ENCODE measurements at regions of chr10 and their contacts with region 1.

Region 1: DNA sequence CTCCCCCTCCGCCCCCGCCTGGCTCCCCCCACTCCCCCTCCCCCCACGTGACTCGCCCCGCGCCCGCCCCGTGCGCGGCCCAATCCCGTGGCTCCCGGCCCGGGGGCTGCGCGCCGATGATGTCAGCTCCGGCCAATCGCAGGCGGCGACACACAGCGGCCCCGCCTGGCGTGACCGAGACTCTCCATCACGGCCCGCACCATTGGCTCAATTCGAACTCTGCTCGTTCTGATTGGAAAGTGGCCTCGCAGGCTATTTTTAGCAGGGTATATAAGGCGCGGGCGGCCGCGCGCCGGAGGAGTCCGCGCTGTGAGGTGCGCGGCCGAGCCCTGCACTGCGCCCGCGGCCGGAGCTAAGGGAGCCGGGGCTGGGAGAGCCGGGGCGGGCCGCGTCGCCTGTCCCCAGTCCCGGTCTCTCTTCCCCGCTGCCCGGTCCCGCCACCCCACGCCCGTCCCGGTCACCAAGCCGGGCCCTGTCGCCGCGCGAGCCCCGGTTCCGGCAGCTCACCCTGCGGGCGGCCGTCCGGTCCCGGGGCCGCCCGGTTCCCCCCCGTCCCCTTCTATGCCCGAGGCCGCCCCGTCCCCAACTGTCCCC is 345 bp upstream of the KLF6 start:
- DNase-seq: peak; percentile 100
- ATAC-seq: peak; percentile 78
- H3K4me3 ChIP-seq: peak overlapping the region in 4 of 5 experiments; percentile 90 to 99 (median 98)
- H3K4me3 Mint-ChIP-seq: peak overlapping the region; percentile 96
- H3K27ac ChIP-seq: peak overlapping the region; percentile 99 to 100
- H3K27ac Mint-ChIP-seq: peak overlapping the region; percentile 96
- H3K4me1 ChIP-seq: peaks cover 30 to 33% of the 10 kb centered on the region in 2 donors
- H3K4me1 Mint-ChIP-seq: peaks cover 31% of the 10 kb centered on the region
- H3K27me3 ChIP-seq: no peaks in the 10 kb centered on the region
- H3K27me3 Mint-ChIP-seq: no peaks in the 10 kb centered on the region
- CTCF ChIP-seq: no peak

Region 2: DNA sequence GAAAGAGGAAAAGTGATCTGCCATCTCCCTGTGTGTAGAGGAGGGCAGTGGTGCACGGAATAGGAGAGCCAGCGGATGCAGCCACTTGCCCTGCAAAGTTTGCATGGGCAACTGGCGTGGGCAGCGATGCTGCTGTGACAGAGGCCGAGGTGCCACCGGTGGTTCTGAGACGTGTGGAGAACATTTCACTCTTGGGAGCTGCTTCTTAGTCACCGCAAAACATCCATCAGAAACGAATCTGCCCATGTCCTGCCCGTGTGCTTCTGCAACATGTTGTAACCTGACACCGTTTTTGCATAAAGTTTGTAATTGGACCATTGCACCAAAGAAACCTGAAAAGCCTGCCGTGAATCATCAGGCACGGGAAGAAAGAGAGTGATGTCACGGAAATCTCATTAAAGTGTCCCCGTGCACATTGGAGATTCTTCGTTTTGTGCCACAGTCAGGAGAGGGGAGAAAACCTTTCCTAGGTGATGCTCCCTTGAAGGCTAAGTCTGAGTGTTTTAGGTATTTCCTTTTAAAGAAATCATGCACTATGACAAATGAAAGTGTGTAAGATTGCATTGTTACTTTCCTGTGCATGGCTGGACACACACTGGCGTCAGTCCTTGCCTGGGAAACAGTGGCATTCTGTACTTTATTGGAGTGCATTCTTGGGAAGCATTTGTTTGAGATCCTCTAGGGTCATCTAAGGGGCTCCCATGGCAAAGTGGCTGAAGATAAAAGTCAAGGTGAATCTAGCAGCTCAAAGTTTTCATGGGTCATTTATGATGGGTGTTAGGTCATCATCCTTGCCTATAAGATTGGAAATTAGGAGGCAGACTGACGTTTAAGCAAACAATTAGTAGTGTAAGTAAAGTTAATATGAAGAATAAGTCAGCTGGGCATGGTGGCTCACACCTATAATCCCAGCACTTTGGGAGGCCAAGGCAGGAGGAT is 302.9 kb before region 1 on chr10:
- CTCF ChIA-PET with region 1: no interaction called
- POLR2A ChIA-PET with region 1: interaction called, 13 read pairs
- intact Hi-C with region 1: loop called (anchors 1 kb)
- DNase-seq: peak; percentile 17
- ATAC-seq: no peak
- H3K4me3 ChIP-seq: peak overlapping the region in 1 of 5 experiments; percentile 10
- H3K4me3 Mint-ChIP-seq: peak overlapping the region; percentile 26
- H3K27ac ChIP-seq: no peak overlapping the region
- H3K27ac Mint-ChIP-seq: peak overlapping the region; percentile 39
- H3K4me1 ChIP-seq: peaks cover 60 to 65% of the 10 kb centered on the region in 2 donors
- H3K4me1 Mint-ChIP-seq: peaks cover 62% of the 10 kb centered on the region
- H3K27me3 ChIP-seq: no peaks in the 10 kb centered on the region
- H3K27me3 Mint-ChIP-seq: no peaks in the 10 kb centered on the region
- CTCF ChIP-seq: no peak

Region 3: DNA sequence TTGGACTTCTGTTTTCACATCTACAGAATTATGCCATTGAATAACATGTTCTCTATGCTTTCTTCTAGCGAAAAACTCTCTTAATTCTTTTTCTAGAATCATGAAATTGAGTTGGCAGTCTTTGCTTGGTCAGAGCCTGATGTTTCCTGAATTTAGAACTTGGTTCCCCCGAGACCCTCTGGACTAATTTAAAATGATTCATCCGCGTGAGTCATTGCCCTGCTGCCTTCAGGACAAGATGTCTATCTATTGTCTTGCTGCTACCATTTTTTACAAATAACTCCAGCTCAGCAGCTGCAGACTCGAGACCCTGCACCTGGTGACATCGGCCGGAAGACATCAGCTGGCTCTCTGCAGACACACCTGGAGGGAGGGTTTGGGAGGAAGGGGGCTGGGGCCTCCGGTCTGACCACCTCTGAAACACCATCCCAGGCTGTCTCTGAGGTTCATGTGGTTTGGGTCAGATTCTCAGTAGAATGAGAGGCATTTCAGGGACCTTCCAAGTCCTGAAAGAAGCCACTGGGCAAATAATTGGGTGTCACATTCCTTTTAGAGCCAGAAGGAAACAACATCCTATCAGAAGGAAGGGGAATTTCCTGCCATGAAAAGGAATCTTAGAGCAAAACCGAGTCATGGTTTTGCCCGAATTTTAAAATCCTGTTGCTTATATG is 20.6 kb after region 1 on chr10:
- CTCF ChIA-PET with region 1: interaction called, 9 read pairs
- POLR2A ChIA-PET with region 1: interaction called, 40 read pairs
- intact Hi-C with region 1: loop called (anchors 1 kb)
- DNase-seq: peak; percentile 59
- ATAC-seq: peak; percentile 54
- H3K4me3 ChIP-seq: peak overlapping the region in 1 of 5 experiments; percentile 16
- H3K4me3 Mint-ChIP-seq: peak overlapping the region; percentile 74
- H3K27ac ChIP-seq: peak overlapping the region; percentile 84 to 85
- H3K27ac Mint-ChIP-seq: peak overlapping the region; percentile 97
- H3K4me1 ChIP-seq: peaks cover 49 to 50% of the 10 kb centered on the region in 2 donors
- H3K4me1 Mint-ChIP-seq: peaks cover 58% of the 10 kb centered on the region
- H3K27me3 ChIP-seq: no peaks in the 10 kb centered on the region
- H3K27me3 Mint-ChIP-seq: no peaks in the 10 kb centered on the region
- CTCF ChIP-seq: no peak

Region 4: GRCh38 chr10:3852147-3852904 is 67.0 kb after region 1 on chr10:
- CTCF ChIA-PET with region 1: interaction called, 3 read pairs
- POLR2A ChIA-PET with region 1: interaction called, 34 read pairs
- intact Hi-C with region 1: loop called (anchors 1 kb)
- DNase-seq: peak; percentile 53
- ATAC-seq: peak; percentile 70
- H3K4me3 ChIP-seq: no peak overlapping the region
- H3K4me3 Mint-ChIP-seq: peak overlapping the region; percentile 50
- H3K27ac ChIP-seq: peak overlapping the region; percentile 66 to 74
- H3K27ac Mint-ChIP-seq: peak overlapping the region; percentile 85
- H3K4me1 ChIP-seq: peaks cover 15 to 22% of the 10 kb centered on the region in 2 donors
- H3K4me1 Mint-ChIP-seq: peaks cover 32% of the 10 kb centered on the region
- H3K27me3 ChIP-seq: no peaks in the 10 kb centered on the region
- H3K27me3 Mint-ChIP-seq: no peaks in the 10 kb centered on the region
- CTCF ChIP-seq: no peak

Region 5: GRCh38 chr10:3935141-3935540 is 149.8 kb after region 1 on chr10:
- CTCF ChIA-PET with region 1: no interaction called
- POLR2A ChIA-PET with region 1: interaction called, 4 read pairs
- intact Hi-C with region 1: loop called (anchors 1 kb)
- DNase-seq: peak; percentile 78
- ATAC-seq: peak; percentile 97
- H3K4me3 ChIP-seq: peak overlapping the region in 4 of 5 experiments; percentile 10 to 51 (median 40)
- H3K4me3 Mint-ChIP-seq: peak overlapping the region; percentile 72
- H3K27ac ChIP-seq: peak overlapping the region; percentile 68
- H3K27ac Mint-ChIP-seq: peak overlapping the region; percentile 87
- H3K4me1 ChIP-seq: peaks cover 13 to 21% of the 10 kb centered on the region in 2 donors
- H3K4me1 Mint-ChIP-seq: peaks cover 27% of the 10 kb centered on the region
- H3K27me3 ChIP-seq: no peaks in the 10 kb centered on the region
- H3K27me3 Mint-ChIP-seq: no peaks in the 10 kb centered on the region
- CTCF ChIP-seq: no peak

Region 6: GRCh38 chr10:4561296-4561695 is 775.9 kb after region 1 on chr10:
- CTCF ChIA-PET with region 1: no interaction called
- POLR2A ChIA-PET with region 1: no interaction called
- intact Hi-C with region 1: no loop called
- DNase-seq: no peak
- ATAC-seq: no peak
- H3K4me3 ChIP-seq: no peak overlapping the region
- H3K4me3 Mint-ChIP-seq: no peak overlapping the region
- H3K27ac ChIP-seq: no peak overlapping the region
- H3K27ac Mint-ChIP-seq: no peak overlapping the region
- H3K4me1 ChIP-seq: no peaks in the 10 kb centered on the region
- H3K4me1 Mint-ChIP-seq: no peaks in the 10 kb centered on the region
- H3K27me3 ChIP-seq: peaks cover 0 to 3% (median 0%) of the 10 kb centered on the region in 4 experiments
- H3K27me3 Mint-ChIP-seq: peaks cover 16% of the 10 kb centered on the region
- CTCF ChIP-seq: no peak